Esophagus muscularis mucosa (tissue), 4 donors: ENCODE measurements at regions of chr6 and their contacts with region 1.

Region 1: GRCh38 chr6:25278914-25279747 is at the start of gene CARMIL1:
- DNase-seq: no peak
- H3K4me3 ChIP-seq: peak within 1 kb of the TSS; percentile 62 to 84 (median 70)
- H3K27ac ChIP-seq: peak within 1 kb of the TSS; percentile 59 to 72 (median 66)
- H3K4me1 ChIP-seq: peaks cover 9 to 32% (median 26%) of the 10 kb centered on the region in 4 donors
- H3K27me3 ChIP-seq: peaks cover 0 to 23% (median 0%) of the 10 kb centered on the region in 4 donors
- CTCF ChIP-seq: peak; percentile 53 to 73 (median 55)
- EP300 ChIP-seq: no peak
- POLR2A ChIP-seq: no peak
- total RNA-seq, gene CARMIL1: 10.0 to 12.1 (median 11.1) TPM

Region 2: DNA sequence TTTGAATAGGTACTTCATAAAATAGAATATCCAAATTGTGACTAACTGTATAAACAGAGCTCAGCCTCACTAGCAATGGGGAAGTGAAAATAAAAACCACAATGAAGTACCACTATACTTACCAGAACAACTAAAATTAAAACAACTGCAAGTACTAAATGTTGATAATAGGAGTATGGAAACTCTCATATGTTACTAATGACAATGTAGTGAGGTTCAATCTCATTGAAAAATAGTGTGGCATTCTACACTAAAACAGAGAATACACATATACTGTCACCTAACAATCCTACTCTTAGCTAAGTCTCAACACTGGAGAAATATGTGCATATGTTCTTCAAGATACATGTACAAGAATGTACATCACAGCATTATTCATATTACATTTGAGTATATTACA is 131.9 kb before region 1 on chr6:
- intact Hi-C with region 1: no loop called
- DNase-seq: no peak
- H3K4me3 ChIP-seq: no peak overlapping the region
- H3K27ac ChIP-seq: no peak overlapping the region
- H3K4me1 ChIP-seq: no peaks in the 10 kb centered on the region
- H3K27me3 ChIP-seq: no peaks in the 10 kb centered on the region
- CTCF ChIP-seq: no peak
- EP300 ChIP-seq: no peak
- POLR2A ChIP-seq: no peak

Region 3: DNA sequence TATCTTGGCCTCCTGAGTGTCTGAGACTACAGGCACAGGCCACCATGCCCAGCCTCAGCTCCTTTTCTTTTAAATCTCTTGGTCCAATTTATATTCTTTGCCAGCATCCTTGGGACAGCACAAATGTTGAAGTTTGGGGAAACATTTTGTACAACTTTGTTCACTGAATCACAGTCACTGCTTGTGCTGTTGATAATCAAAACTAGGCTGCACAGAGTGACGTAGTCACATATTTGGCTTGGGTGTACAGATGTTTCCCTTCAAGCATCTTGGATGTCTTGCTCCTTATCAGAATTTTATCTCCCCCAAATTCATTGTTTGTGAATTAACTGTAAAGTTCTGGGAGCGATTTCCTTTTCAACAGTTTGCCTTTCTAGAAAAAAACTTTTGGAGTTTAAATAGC is 17.9 kb after region 1 on chr6:
- intact Hi-C with region 1: no loop called
- DNase-seq: no peak
- H3K4me3 ChIP-seq: no peak overlapping the region
- H3K27ac ChIP-seq: peak overlapping the region; percentile 51 to 74 (median 62)
- H3K4me1 ChIP-seq: peaks cover 12 to 28% (median 19%) of the 10 kb centered on the region in 4 donors
- H3K27me3 ChIP-seq: no peaks in the 10 kb centered on the region
- CTCF ChIP-seq: no peak
- EP300 ChIP-seq: no peak
- POLR2A ChIP-seq: no peak

Region 4: DNA sequence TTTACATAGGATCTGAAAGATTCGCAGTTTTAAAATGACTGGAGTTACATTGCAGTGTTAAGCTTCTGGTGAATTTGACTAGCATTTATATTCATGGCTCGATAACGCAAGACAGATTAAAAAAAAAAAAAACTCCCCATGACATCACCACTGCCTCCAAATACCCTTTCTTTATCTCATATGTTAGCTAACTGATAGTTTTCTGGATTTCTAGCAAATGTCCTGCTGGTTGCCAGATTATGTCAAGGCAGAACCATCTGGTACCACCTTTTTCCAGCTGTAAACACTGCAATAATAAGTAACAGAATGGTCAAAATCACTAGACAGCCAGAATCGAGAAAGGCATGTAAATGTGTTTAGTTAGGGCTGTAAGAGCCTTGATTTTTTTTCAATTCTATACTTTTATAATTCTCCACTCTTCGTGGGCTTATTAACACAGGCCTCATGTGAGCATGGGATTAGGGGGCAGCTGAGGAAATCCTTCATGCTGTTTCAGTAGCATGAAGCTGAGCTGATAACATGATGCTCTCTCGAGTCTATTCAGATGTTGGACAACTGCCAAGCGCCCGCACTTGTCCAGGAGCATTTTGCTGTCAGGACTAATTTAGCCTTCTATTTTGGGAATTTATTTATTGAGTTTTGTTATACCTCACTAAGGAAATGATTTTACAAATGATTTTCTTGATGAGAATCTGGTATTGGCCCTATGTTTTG is 206.8 kb after region 1 on chr6:
- intact Hi-C with region 1: loop called (anchors 5 kb)
- DNase-seq: no peak
- H3K4me3 ChIP-seq: no peak overlapping the region
- H3K27ac ChIP-seq: no peak overlapping the region
- H3K4me1 ChIP-seq: peaks cover 0 to 8% (median 4%) of the 10 kb centered on the region in 4 donors
- H3K27me3 ChIP-seq: no peaks in the 10 kb centered on the region
- CTCF ChIP-seq: no peak
- EP300 ChIP-seq: no peak
- POLR2A ChIP-seq: no peak